ENCODE measurements at regions of chr4 and their contacts with region 1.

Region 1: DNA sequence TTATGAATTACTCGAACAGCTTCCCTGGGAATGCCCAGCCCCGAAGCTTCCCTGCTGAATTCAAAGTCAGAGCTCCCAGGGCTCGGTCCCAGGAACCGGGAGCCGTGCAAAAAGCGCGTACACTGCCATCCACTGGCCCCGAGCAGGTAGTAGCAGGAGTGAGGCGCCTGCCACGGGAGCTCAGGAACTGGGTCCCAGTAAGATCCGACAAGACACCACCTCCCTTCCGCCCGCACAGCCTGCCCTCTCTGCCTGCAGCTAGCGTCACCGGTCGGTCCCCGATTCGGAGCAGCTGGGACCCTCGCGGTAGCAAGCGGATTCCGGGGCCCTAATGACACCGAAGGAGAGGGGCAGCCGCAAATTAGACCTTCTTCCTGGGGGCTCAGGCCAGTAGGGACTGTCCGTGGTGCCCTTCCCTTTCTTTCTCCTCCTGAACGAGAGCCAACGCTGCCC is 1.2 kb downstream of the CORIN start:
- DNase-seq: peak in 1 of 2 donors; percentile 86
- H3K4me3 ChIP-seq: peak overlapping the region; percentile 62 to 69
- H3K27ac ChIP-seq: no peak overlapping the region
- H3K4me1 ChIP-seq: peaks cover 5 to 11% of the 10 kb centered on the region in 2 donors
- H3K27me3 ChIP-seq: no peaks in the 10 kb centered on the region
- CTCF ChIP-seq: peak; percentile 27 to 66 (median 52)

Region 2: DNA sequence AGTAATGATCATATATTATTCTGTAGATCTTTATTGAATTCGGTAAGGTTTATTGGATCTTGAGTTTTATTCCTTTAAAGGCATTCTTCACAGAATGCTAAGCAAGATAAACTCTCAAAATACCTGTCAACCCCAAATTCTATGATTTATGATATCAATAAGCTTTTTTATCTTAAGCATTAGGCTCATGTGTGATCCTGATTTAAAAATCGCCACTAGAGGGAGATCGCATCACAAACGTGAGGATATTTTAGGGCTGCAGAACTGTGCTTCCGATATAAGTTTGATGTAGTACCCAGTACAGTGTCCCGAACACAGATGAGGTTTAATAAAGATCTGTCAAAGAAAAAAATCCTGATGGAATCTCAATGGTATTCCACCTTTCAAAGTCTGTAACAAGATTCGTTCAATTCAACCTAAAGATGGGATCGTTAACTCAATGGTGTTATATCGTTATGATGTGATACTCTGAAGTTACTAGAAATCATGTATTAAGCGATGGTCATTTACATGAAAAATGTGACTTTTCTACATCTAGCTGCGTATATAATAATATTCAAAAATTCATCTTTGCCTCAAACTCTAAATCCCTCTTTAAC is 167.8 kb before region 1 on chr4:
- intact Hi-C with region 1: loop called (anchors 2 kb)
- DNase-seq: no peak
- H3K4me3 ChIP-seq: no peak overlapping the region
- H3K27ac ChIP-seq: no peak overlapping the region
- H3K4me1 ChIP-seq: no peaks in the 10 kb centered on the region
- H3K27me3 ChIP-seq: no peaks in the 10 kb centered on the region
- CTCF ChIP-seq: peak in 2 of 3 experiments; percentile 51 to 66

Region 3: DNA sequence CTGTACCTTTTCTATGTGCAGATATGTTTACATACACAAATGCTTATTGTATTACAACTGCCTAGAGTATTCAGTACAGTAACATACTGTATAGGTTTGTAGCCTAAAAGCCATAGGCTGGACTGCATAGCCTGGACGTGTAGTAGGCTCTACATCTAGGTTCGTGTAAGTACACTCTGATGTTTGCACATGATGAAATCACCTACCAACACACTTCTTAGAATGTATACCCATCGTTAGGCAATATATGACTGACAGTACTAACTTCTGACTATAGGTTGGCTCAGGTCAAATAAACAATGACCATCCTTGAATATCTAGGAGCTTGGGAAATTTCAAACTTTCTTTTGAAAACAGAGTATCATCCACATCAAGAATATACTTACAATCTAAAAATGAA is 137.8 kb before region 1 on chr4:
- intact Hi-C with region 1: loop called (anchors 5 kb)
- DNase-seq: no peak
- H3K4me3 ChIP-seq: no peak overlapping the region
- H3K27ac ChIP-seq: no peak overlapping the region
- H3K4me1 ChIP-seq: no peaks in the 10 kb centered on the region
- H3K27me3 ChIP-seq: no peaks in the 10 kb centered on the region
- CTCF ChIP-seq: no peak

Region 4: GRCh38 chr4:47891928-47892327 is 55.3 kb after region 1 on chr4:
- intact Hi-C with region 1: no loop called
- DNase-seq: no peak
- H3K4me3 ChIP-seq: no peak overlapping the region
- H3K27ac ChIP-seq: no peak overlapping the region
- H3K4me1 ChIP-seq: no peaks in the 10 kb centered on the region
- H3K27me3 ChIP-seq: no peaks in the 10 kb centered on the region
- CTCF ChIP-seq: no peak

Region 5: DNA sequence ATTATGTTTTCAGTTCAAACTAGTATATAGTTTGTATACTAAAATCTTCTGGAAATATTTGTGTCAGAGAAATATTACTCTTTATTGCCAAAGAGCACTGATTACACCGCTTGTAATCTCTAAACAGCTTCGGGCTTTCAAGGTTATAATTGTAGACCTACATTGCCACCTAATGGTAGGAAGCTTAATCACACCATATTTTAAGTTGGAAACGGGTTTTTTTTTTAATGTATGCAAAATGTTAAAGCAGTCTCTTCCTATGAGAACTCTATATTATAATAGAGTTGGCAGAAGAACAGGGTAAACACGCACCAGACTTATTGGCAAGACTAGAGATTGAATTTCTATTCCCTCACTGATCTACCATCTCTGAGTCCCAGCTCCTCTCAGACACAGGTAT is 97.2 kb after region 1 on chr4:
- intact Hi-C with region 1: no loop called
- DNase-seq: no peak
- H3K4me3 ChIP-seq: no peak overlapping the region
- H3K27ac ChIP-seq: no peak overlapping the region
- H3K4me1 ChIP-seq: no peaks in the 10 kb centered on the region
- H3K27me3 ChIP-seq: no peaks in the 10 kb centered on the region
- CTCF ChIP-seq: peak in 2 of 3 experiments; percentile 57 to 63